MCF 10A (cell line): ENCODE measurements at regions of chr1 and their contacts with region 1.

Region 1: GRCh38 chr1:44792783-44793714 is 5.1 kb upstream of the BEST4 start:
- DNase-seq: no peak
- H3K4me3 Mint-ChIP-seq: no peak overlapping the region
- H3K27ac Mint-ChIP-seq: peak overlapping the region; percentile 85
- H3K4me1 Mint-ChIP-seq: peaks cover 7% of the 10 kb centered on the region
- H3K27me3 Mint-ChIP-seq: no peaks in the 10 kb centered on the region
- CTCF ChIP-seq: no peak

Region 2: DNA sequence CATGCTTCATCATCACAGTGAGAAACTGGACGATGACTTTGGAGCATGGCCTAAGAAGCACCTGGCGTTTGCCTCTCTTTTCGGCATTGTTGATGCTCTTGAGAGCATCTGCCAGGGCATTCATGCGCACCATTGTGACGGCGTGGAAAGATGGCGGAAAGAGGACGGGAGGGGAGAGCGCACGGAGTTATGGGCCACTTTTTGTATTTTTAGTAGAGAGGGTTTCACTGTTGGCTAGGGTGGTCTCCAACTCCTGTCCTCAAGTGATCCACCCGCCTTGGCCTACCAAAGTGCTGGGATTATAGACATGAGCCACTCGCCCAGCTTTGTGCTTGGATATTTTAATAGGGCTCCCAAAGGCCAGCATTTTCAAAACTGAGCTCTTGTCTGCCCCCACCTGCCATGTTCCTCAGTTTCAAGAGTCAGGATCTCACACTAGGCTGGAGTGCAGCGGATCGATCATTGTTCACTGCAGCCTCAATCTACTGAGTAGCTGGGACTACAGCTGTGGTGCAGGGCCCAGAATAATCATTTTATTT is 12.4 kb before region 1 on chr1:
- CTCF ChIA-PET with region 1: interaction called, 14 read pairs
- POLR2A ChIA-PET with region 1: interaction called, 36 read pairs
- intact Hi-C with region 1: no loop called
- DNase-seq: no peak
- H3K4me3 Mint-ChIP-seq: no peak overlapping the region
- H3K27ac Mint-ChIP-seq: no peak overlapping the region
- H3K4me1 Mint-ChIP-seq: peaks cover 26% of the 10 kb centered on the region
- H3K27me3 Mint-ChIP-seq: no peaks in the 10 kb centered on the region
- CTCF ChIP-seq: no peak

Region 3: DNA sequence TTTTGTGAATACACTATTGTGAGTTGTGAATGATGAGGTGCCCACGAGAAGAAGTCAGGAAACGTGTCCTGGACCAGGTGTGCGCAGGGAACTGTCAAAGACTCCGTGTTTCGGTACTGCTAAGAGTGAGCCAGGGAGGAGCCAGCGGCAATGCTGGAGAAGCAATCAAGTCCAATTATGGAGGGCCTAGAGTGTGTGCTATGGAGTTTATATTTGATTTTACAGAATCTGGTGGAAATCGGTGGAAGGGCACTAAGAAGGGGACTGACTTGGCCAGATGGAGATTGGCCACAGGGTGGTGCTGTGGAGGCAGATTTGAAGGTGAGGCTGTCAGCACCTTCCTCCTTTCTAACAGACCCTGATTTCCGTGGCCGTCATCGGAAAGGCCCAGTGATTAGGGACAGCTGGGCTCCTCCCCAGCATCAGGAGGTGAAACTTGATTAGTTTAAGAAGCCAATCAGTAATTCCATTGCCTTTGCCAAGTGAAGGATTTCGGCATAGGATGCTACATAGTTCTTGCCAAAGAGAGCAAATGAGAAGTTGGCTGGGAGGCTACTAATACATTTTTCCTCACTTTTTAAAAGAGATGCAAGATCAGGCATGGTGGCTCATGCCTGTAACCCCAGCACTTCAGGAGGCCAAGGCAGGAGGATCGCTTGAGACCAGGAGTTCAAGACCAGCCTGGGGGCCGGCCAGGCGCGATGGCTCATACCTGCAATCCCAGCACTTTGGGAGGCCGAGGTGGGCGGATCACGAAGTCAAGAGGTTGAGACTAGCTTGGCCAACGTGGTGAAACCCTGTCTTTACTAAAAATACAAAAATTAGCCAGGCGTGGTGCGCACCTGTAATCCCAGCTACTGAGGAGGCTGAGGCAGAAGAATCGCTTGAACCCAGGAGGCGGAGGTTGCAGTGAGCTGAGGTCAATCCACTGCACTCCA is 43.0 kb after region 1 on chr1:
- CTCF ChIA-PET with region 1: interaction called, 4 read pairs
- POLR2A ChIA-PET with region 1: no interaction called
- intact Hi-C with region 1: loop called (anchors 2 kb)
- DNase-seq: peak; percentile 78
- H3K4me3 Mint-ChIP-seq: no peak overlapping the region
- H3K27ac Mint-ChIP-seq: peak overlapping the region; percentile 13
- H3K4me1 Mint-ChIP-seq: no peaks in the 10 kb centered on the region
- H3K27me3 Mint-ChIP-seq: no peaks in the 10 kb centered on the region
- CTCF ChIP-seq: peak; percentile 81